Activated T-helper 2 cell treated with anti-CD3 and anti-CD28 coated beads, Interferon-gamma antibody, Interleukin-2, Interleukin-4, amounts not matched to agents 10 μg/mL and 5 μg/mL and 100 μg/mL, durations not matched to agents 14 hours and 24 hours and 36 hours (primary cell): ENCODE measurements at regions of chr18 and their contacts with region 1.

Region 1: GRCh38 chr18:69978732-69979715 is 31.4 kb upstream of the CD226 start:
- DNase-seq: no peak
- H3K4me3 Mint-ChIP-seq: no peak overlapping the region
- H3K27ac Mint-ChIP-seq: peak overlapping the region; percentile 1
- H3K4me1 Mint-ChIP-seq: peaks cover 36% of the 10 kb centered on the region
- H3K27me3 Mint-ChIP-seq: no peaks in the 10 kb centered on the region

Region 2: DNA sequence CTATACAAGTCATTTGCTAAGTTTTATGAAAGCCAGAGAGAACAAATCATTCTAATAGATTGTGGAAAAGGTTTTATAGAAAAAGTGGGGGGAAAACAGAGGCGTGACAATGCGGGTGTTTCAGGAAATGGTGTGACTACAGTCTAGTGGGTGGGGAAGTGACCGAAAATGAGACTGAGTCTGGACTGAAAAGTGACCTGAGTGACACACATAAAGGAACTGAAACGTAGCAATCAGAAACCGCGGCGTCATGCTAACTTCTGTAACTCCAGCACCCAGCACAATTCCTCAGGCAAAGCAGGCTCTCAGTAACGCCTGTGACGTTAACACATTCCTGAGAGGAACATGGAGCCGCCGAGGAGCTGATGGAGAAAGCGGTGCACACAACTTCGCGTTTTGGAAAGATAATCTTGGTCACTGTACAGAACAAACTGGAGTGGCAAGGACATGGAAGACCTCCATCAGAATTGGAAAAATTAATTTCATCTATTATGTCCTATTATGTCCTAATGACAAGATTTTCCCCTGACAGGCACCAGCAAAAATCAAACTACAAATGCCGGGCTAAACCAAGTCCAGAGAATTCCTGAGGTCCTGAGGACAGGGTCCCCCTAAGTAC is 30.0 kb before region 1 on chr18:
- intact Hi-C with region 1: loop called (anchors 2 kb)
- DNase-seq: no peak
- H3K4me3 Mint-ChIP-seq: no peak overlapping the region
- H3K27ac Mint-ChIP-seq: no peak overlapping the region
- H3K4me1 Mint-ChIP-seq: peaks cover 54% of the 10 kb centered on the region
- H3K27me3 Mint-ChIP-seq: no peaks in the 10 kb centered on the region

Region 3: GRCh38 chr18:70598406-70598805 is 619.4 kb after region 1 on chr18:
- intact Hi-C with region 1: no loop called
- DNase-seq: no peak
- H3K4me3 Mint-ChIP-seq: no peak overlapping the region
- H3K27ac Mint-ChIP-seq: no peak overlapping the region
- H3K4me1 Mint-ChIP-seq: peaks cover 4% of the 10 kb centered on the region
- H3K27me3 Mint-ChIP-seq: no peaks in the 10 kb centered on the region